ENCODE measurements at regions of chr2 and their contacts with region 1.

Region 1: DNA sequence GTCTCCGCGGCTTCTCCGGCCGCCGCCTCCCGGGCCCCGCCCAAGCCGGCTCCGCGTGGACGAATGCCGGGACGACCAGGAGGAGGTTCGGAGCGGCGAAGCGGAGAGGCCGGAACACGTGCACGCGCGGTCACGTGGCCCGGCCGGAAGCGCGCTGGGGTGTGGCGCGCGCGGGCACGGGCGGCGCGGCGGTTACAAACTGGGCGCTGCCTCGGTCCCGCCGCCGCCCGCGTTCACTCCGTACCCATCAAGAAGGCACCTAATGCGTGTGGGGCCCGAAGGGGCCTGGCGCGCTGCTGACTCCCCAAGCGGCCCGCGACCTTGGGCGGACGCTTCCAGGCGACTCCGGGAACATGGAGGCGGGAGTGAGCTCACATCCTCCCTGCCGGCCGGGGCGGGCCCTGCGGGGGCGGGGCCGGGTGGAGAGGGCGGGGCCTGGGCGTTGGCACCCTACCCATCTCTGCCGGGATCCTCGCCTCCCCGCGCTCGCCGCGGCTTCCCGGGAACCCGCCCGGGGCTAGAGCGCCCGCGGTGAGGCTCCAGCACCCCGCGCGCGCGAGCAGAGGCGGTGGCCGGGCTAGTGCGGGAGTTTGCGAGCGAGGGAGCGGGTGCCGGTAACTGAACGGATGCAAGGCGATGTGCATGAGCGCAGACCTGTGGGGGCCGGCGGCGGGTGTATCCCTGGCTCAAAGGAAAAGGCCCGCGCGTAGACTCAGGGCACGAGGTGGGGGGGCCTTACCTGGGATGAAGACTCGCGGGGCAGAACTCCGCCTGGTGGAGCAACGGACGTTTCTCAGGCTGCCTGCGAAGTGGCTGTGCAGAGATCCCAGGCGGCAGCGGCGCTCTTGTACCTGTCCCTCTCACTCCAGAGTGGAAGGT is at the start of gene TMEM185B:
- DNase-seq: peak; percentile 93
- H3K4me3 Mint-ChIP-seq: peak within 1 kb of the TSS; percentile 78
- H3K27ac Mint-ChIP-seq: peak within 1 kb of the TSS; percentile 83
- H3K4me1 Mint-ChIP-seq: peaks cover 65% of the 10 kb centered on the region
- H3K27me3 Mint-ChIP-seq: no peaks in the 10 kb centered on the region
- total RNA-seq, gene TMEM185B: 19.2 to 21.8 TPM

Region 2: GRCh38 chr2:120210262-120210693 is 13.0 kb before region 1 on chr2:
- CTCF ChIA-PET with region 1: interaction called, 5 read pairs
- POLR2A ChIA-PET with region 1: interaction called, 17 read pairs
- DNase-seq: peak; percentile 41
- H3K4me3 Mint-ChIP-seq: no peak overlapping the region
- H3K27ac Mint-ChIP-seq: peak overlapping the region; percentile 85
- H3K4me1 Mint-ChIP-seq: peaks cover 17% of the 10 kb centered on the region
- H3K27me3 Mint-ChIP-seq: no peaks in the 10 kb centered on the region

Region 3: GRCh38 chr2:120252225-120253021 is 29.1 kb after region 1 on chr2 and contains the start of gene RALB:
- CTCF ChIA-PET with region 1: interaction called, 3 read pairs
- POLR2A ChIA-PET with region 1: interaction called, 10 read pairs
- DNase-seq: peak; percentile 99
- H3K4me3 Mint-ChIP-seq: peak within 1 kb of the TSS; percentile 99
- H3K27ac Mint-ChIP-seq: peak within 1 kb of the TSS; percentile 85
- H3K4me1 Mint-ChIP-seq: peaks cover 64% of the 10 kb centered on the region
- H3K27me3 Mint-ChIP-seq: peaks cover 10% of the 10 kb centered on the region
- total RNA-seq, gene RALB: 59.2 to 59.3 TPM

Measured in activated CD4-positive, alpha-beta memory T cell treated with anti-CD3 and anti-CD28 coated beads, Interleukin-2, amount 10 ng/mL, durations not matched to agents 7 days and 5 days (primary cell).